Left cardiac atrium (tissue), 4 donors: ENCODE measurements at regions of chr12 and their contacts with region 1.

Region 1: GRCh38 chr12:22088886-22089285 is 42.9 kb downstream of the CMAS start:
- DNase-seq: no peak
- ATAC-seq: no peak

Region 2: GRCh38 chr12:22459838-22460490 is 371.1 kb after region 1 on chr12:
- intact Hi-C with region 1: loop called (anchors 5 kb)
- DNase-seq: no peak
- ATAC-seq: peak; percentile 53 to 54